ENCODE measurements at regions of chr11 and their contacts with region 1.

Region 1: GRCh38 chr11:4187055-4187988 is 92.7 kb downstream of the RRM1 start:
- DNase-seq: peak; percentile 65 to 70 (median 69)
- H3K4me3 ChIP-seq: peak overlapping the region; percentile 43 to 79 (median 62)
- H3K4me3 Mint-ChIP-seq: peak overlapping the region; percentile 80 to 88
- H3K27ac ChIP-seq: no peak overlapping the region
- H3K27ac Mint-ChIP-seq: peak overlapping the region in 1 of 7 donors; percentile 32
- H3K4me1 ChIP-seq: peaks cover 6 to 10% of the 10 kb centered on the region in 2 donors
- H3K4me1 Mint-ChIP-seq: peaks cover 4% of the 10 kb centered on the region
- H3K27me3 ChIP-seq: no peaks in the 10 kb centered on the region
- H3K27me3 Mint-ChIP-seq: peaks cover 4 to 11% (median 6%) of the 10 kb centered on the region in 3 donors
- CTCF ChIP-seq: peak; percentile 94

Region 2: GRCh38 chr11:4493480-4493818 is 306.1 kb after region 1 on chr11:
- intact Hi-C with region 1: loop called (anchors 2 to 5 kb)
- DNase-seq: no peak
- H3K4me3 ChIP-seq: no peak overlapping the region
- H3K4me3 Mint-ChIP-seq: no peak overlapping the region
- H3K27ac ChIP-seq: no peak overlapping the region
- H3K27ac Mint-ChIP-seq: no peak overlapping the region
- H3K4me1 ChIP-seq: peaks cover 7 to 11% of the 10 kb centered on the region in 2 donors
- H3K4me1 Mint-ChIP-seq: peaks cover 16% of the 10 kb centered on the region
- H3K27me3 ChIP-seq: peaks cover 3 to 4% of the 10 kb centered on the region in 2 donors
- H3K27me3 Mint-ChIP-seq: peaks cover 9 to 18% (median 12%) of the 10 kb centered on the region in 3 donors
- CTCF ChIP-seq: peak; percentile 37

Region 3: DNA sequence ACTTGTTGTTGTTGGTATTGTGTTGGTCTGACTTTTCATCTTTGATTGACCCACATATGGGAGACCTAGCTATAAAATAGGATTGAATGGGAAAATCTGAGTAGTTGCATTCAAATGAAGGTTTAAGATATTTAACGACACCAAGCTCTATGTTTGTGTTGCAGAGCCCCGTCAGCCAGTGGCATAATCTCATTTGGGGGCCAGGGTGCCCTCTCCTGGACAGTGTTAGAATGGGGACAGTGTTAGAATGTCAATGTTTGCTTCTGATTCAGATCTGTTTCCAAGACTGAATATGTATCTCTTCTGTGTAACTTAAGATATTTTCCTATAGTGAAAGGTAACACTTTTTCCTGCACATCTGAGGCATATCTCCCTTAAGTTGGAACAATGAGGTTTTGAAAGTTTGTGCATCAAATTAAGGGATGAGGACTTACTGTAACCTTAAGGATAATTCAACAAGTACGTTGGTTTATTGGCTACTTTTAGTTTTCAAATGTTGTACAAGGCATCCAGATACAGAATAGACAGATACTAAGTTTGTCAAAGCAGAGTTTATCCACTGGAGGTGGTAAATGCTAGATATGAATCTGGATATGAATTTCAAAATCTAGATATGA is 352.4 kb after region 1 on chr11:
- intact Hi-C with region 1: loop called (anchors 1 to 2 kb)
- DNase-seq: peak; percentile 17 to 42 (median 34)
- H3K4me3 ChIP-seq: no peak overlapping the region
- H3K4me3 Mint-ChIP-seq: no peak overlapping the region
- H3K27ac ChIP-seq: no peak overlapping the region
- H3K27ac Mint-ChIP-seq: no peak overlapping the region
- H3K4me1 ChIP-seq: no peaks in the 10 kb centered on the region
- H3K4me1 Mint-ChIP-seq: peaks cover 3% of the 10 kb centered on the region
- H3K27me3 ChIP-seq: peaks cover 9 to 12% of the 10 kb centered on the region in 2 donors
- H3K27me3 Mint-ChIP-seq: peaks cover 3 to 5% (median 4%) of the 10 kb centered on the region in 3 donors
- CTCF ChIP-seq: peak; percentile 81

Region 4: GRCh38 chr11:4636962-4637661 is 449.8 kb after region 1 on chr11 and contains the start of gene OR51D1:
- intact Hi-C with region 1: loop called in 1 of 2 experiments (anchors 10 kb)
- DNase-seq: peak; percentile 30 to 52 (median 39)
- H3K4me3 ChIP-seq: no peak within 1 kb of the TSS
- H3K4me3 Mint-ChIP-seq: no peak within 1 kb of the TSS
- H3K27ac ChIP-seq: no peak within 1 kb of the TSS
- H3K27ac Mint-ChIP-seq: no peak within 1 kb of the TSS
- H3K4me1 ChIP-seq: no peaks in the 10 kb centered on the region
- H3K4me1 Mint-ChIP-seq: no peaks in the 10 kb centered on the region
- H3K27me3 ChIP-seq: peaks cover 0 to 2% of the 10 kb centered on the region in 2 donors
- H3K27me3 Mint-ChIP-seq: peaks cover 0 to 3% (median 0%) of the 10 kb centered on the region in 3 donors
- CTCF ChIP-seq: peak; percentile 85
- polyA plus RNA-seq, gene OR51D1: not detected

Region 5: GRCh38 chr11:5004424-5005274 is 817.3 kb after region 1 on chr11:
- intact Hi-C with region 1: loop called in 1 of 2 experiments (anchors 5 kb)
- DNase-seq: no peak
- H3K4me3 ChIP-seq: no peak overlapping the region
- H3K4me3 Mint-ChIP-seq: no peak overlapping the region
- H3K27ac ChIP-seq: no peak overlapping the region
- H3K27ac Mint-ChIP-seq: no peak overlapping the region
- H3K4me1 ChIP-seq: no peaks in the 10 kb centered on the region
- H3K4me1 Mint-ChIP-seq: no peaks in the 10 kb centered on the region
- H3K27me3 ChIP-seq: peaks cover 0 to 2% of the 10 kb centered on the region in 2 donors
- H3K27me3 Mint-ChIP-seq: peaks cover 0 to 8% (median 0%) of the 10 kb centered on the region in 3 donors
- CTCF ChIP-seq: no peak

Measured in CD14-positive monocyte (primary cell).